Activated CD8-positive, alpha-beta T cell treated with anti-CD3 and anti-CD28 coated beads, Interleukin-2, amount 10 ng/mL, durations not matched to agents 7 days and 5 days (primary cell): ENCODE measurements at regions of chr11 and their contacts with region 1.

Region 1: DNA sequence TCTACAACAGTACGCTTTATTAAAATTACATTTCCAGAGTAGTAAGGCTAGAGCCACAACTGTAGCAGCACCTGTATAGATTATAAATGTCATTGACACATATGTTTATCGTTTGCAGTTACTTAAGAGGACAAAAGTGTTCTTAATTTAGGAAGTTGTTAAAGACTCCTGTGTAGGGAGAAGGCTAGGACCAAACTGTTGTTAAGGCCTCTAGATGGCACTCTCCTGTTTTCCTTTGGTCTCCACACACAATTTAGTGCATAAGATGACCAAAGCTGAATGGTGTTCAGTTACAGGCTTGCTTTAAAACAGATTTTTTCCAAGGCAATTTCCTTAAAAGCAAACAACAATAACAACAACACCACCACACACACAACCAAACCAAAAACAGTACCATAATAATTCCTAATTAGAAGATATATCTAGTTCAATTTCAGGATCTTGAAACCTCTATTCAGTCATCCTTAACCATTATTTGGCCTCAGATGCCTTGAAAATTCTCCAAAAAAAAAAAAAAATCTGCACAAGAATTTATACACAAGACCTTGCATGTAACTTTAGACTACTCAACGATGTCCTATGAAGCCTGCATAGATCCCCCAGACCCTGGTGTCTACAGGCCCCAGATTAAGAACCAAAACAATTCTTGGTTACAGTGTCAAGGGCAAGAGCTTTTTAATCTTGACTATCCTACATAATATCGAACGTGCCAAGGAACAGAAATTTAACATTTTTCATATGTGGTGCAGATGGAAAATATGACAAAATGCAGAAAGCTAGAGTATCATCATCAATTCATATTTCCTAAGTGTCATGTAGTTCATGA is 42.6 kb upstream of the APOA1 start:
- DNase-seq: peak; percentile 55
- ATAC-seq: peak; percentile 75
- H3K4me3 Mint-ChIP-seq: no peak overlapping the region
- H3K27ac Mint-ChIP-seq: peak overlapping the region; percentile 20
- H3K4me1 Mint-ChIP-seq: peaks cover 2% of the 10 kb centered on the region
- H3K27me3 Mint-ChIP-seq: no peaks in the 10 kb centered on the region

Region 2: DNA sequence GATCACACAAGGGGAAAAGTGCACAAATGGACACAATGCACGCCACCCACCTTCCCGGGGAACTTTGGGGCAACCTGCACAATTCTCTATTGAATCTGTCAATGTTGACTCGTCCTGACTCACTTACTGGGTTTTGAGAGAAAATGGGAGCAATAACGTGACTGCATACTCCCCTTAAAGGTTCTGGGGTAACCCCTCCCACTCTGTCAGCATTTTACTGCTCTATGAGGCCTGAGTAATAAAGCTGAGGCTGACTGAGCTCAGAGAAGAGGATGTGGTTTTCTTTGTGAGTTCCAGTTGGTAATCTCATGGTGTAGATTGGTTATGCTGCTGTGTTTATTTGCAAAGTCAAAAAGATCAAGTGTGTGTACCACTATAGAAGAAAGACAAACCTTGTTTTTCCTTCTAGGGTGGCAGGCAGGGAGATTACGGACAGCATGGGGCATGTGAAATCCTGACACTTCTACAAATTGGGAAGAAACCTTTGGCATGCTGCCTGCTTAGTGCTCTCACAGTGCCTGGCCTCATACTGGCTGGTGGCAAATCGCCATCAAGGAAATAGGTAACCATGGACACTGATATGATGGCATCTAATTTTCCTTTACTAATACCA is 26.4 kb before region 1 on chr11:
- CTCF ChIA-PET with region 1: interaction called, 10 read pairs
- POLR2A ChIA-PET with region 1: no interaction called
- DNase-seq: peak; percentile 83
- ATAC-seq: peak; percentile 95
- H3K4me3 Mint-ChIP-seq: peak overlapping the region; percentile 35
- H3K27ac Mint-ChIP-seq: peak overlapping the region; percentile 93
- H3K4me1 Mint-ChIP-seq: peaks cover 65% of the 10 kb centered on the region
- H3K27me3 Mint-ChIP-seq: no peaks in the 10 kb centered on the region

Region 3: GRCh38 chr11:116890193-116890592 is 10.2 kb after region 1 on chr11:
- CTCF ChIA-PET with region 1: interaction called, 18 read pairs
- POLR2A ChIA-PET with region 1: no interaction called
- DNase-seq: peak; percentile 47
- ATAC-seq: peak; percentile 74
- H3K4me3 Mint-ChIP-seq: no peak overlapping the region
- H3K27ac Mint-ChIP-seq: peak overlapping the region; percentile 69
- H3K4me1 Mint-ChIP-seq: peaks cover 16% of the 10 kb centered on the region
- H3K27me3 Mint-ChIP-seq: no peaks in the 10 kb centered on the region

Region 4: DNA sequence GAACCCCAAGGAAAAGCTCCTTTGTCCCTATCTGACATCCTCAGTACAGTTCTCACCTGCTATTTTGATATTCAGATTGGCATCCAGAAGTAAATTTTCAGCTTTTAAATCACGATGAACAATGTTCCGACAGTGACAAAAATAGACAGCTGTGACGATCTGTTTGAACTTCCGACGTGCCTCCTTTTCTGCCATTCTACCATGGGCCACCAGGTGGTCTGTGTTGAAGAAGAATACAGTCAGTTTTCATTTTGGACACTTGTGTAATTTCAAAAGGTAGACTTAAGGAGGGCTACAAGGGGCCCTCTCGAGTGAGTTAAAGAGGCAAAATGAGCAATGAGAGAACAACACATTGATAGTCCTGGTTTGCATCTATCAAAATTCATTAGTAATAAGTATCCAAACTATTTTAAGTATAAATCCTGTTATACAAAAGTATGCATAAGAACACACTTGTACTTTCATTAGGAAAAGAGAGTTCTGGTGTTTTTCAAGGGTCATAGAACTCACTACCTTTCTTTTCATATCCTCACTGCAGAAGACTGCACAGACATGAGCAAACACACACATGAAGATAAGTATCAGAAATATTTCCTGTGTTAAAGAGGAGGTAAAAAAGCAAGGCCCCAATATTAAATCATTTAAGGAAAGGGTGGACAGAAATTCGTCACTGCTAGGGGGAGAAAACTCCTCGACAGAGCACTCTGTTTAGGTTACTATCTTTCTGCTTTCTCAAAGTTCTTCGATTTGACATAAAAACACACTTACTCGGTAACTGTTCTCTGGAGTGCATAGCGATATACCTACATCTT is 47.4 kb after region 1 on chr11:
- CTCF ChIA-PET with region 1: interaction called, 19 read pairs
- POLR2A ChIA-PET with region 1: no interaction called
- DNase-seq: peak; percentile 66
- ATAC-seq: peak; percentile 28
- H3K4me3 Mint-ChIP-seq: peak overlapping the region; percentile 48
- H3K27ac Mint-ChIP-seq: peak overlapping the region; percentile 73
- H3K4me1 Mint-ChIP-seq: peaks cover 82% of the 10 kb centered on the region
- H3K27me3 Mint-ChIP-seq: no peaks in the 10 kb centered on the region

Region 5: DNA sequence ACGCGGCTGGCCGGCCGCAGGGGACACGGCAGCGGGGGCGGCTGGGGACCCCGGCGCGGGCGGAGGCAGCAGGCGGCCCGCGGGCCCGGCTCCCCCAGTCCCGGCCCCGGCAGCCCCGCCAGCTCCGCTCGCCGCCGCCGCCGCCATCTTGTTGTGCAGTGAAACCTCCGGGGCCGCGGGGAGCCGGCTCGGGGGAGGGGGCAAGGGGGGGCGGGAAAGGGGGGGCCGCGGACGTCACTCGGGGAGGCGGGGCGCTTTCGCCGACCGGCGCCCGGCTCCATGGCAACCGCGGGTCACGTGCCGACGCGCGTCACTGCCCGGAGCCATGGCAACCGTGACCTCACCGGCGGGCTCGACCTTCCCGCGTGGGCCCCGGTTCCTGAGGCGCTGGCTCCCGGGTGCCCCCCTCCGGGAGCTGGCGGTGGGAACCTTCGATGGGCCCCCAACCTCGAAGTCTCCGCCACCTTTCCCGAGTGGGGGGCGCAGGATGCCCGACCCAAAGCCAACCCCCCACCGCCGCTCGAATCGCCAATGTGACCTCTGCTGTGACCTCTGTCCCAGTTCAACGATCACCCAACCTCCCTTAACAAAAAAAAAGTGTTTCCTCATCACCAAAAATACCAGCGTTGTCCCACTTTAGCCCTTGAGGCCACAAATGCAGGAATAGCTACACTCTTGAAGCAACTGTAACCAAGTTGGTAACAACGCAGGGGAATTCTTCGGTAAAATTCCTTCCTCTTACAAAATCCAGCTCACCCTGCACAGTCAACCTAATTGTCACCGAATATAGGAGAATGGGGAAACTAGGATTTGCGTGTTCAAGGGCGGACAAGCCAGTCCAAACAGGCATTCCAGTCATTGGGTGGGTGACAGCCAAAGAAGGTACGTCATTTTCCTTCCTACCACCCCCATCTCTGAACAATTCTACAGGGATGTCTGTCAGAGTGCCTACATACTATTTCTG is 218.5 kb after region 1 on chr11 and contains the start of gene SIK3:
- CTCF ChIA-PET with region 1: interaction called, 45 read pairs
- POLR2A ChIA-PET with region 1: interaction called, 3 read pairs
- DNase-seq: peak; percentile 93
- ATAC-seq: peak; percentile 73
- H3K4me3 Mint-ChIP-seq: peak within 1 kb of the TSS; percentile 93
- H3K27ac Mint-ChIP-seq: peak within 1 kb of the TSS; percentile 93
- H3K4me1 Mint-ChIP-seq: peaks cover 44% of the 10 kb centered on the region
- H3K27me3 Mint-ChIP-seq: no peaks in the 10 kb centered on the region
- total RNA-seq, gene SIK3: 25.9 to 31.4 TPM

Region 6: GRCh38 chr11:117107701-117108590 is 227.9 kb after region 1 on chr11:
- CTCF ChIA-PET with region 1: interaction called, 57 read pairs
- POLR2A ChIA-PET with region 1: no interaction called
- DNase-seq: no peak
- ATAC-seq: no peak
- H3K4me3 Mint-ChIP-seq: no peak overlapping the region
- H3K27ac Mint-ChIP-seq: no peak overlapping the region
- H3K4me1 Mint-ChIP-seq: peaks cover 5% of the 10 kb centered on the region
- H3K27me3 Mint-ChIP-seq: peaks cover 2% of the 10 kb centered on the region

Region 7: DNA sequence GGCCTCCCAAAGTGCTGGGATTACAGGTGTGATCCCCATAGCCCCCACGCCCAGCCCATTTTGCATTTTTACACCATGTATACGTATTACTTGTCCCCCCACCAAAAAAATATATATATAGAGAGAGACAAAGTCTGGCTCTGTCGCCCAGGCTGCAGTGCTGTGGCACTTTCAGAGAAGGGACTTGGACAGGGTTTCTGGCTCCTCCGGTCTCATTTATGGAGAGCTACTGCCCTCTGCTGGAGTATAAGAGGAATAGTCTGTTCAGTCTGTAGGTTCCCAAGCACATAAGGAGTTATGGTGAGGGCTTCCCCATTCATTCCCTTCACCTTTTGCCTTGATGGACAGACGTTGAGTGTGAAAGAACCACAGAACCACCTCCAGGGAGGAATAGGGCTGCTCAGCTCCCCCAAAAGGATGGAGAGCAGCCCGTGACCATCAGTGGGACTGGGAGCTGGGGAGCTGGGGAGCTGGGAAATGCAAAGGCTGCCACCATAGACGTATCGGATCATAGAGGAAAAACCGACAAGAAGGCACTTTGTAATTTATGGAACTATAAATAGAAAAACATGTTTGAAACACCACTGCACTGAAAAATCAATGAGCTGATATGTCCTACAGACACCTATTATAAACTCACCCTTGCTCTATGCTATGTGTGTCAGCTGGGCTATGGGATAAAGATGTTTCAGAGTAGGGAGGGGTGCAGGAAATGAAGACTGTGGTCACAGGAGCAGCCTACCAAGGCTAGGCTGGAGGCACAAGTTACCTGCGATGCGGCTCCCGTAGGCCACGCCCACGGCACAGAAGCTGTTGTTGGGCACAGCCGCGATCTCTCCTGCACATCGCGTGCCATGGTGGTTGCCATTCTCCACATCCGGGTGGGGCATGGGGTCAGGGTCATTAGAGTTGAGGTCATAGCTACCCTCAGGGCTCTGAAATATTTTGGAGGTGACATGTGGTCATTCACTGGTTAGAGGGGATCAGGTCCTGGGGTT is 346.7 kb after region 1 on chr11:
- CTCF ChIA-PET with region 1: interaction called, 13 read pairs
- POLR2A ChIA-PET with region 1: no interaction called
- DNase-seq: peak; percentile 64
- ATAC-seq: peak; percentile 55
- H3K4me3 Mint-ChIP-seq: no peak overlapping the region
- H3K27ac Mint-ChIP-seq: peak overlapping the region; percentile 20
- H3K4me1 Mint-ChIP-seq: peaks cover 37% of the 10 kb centered on the region
- H3K27me3 Mint-ChIP-seq: no peaks in the 10 kb centered on the region